Endothelial cell of umbilical vein (primary cell): ENCODE measurements at regions of chr11 and their contacts with region 1.

Region 1: GRCh38 chr11:82733444-82734119 is at the start of gene FAM181B:
- DNase-seq: peak; percentile 29
- H3K4me3 ChIP-seq: peak within 1 kb of the TSS; percentile 21 to 24 (median 22)
- H3K27ac ChIP-seq: no peak within 1 kb of the TSS
- H3K4me1 ChIP-seq: no peaks in the 10 kb centered on the region
- H3K27me3 ChIP-seq: peaks cover 47 to 79% of the 10 kb centered on the region in 2 experiments
- CTCF ChIP-seq: no peak
- POLR2A ChIP-seq: no peak
- total RNA-seq, gene FAM181B: not detected in 2 replicates

Region 2: GRCh38 chr11:82701847-82702520 is 31.6 kb before region 1 on chr11:
- CTCF ChIA-PET with region 1: no interaction called
- POLR2A ChIA-PET with region 1: no interaction called
- dilution Hi-C with region 1: no loop called
- intact Hi-C with region 1: loop called (anchors 1 kb)
- DNase-seq: peak; percentile 50
- H3K4me3 ChIP-seq: no peak overlapping the region
- H3K27ac ChIP-seq: no peak overlapping the region
- H3K4me1 ChIP-seq: no peaks in the 10 kb centered on the region
- H3K27me3 ChIP-seq: peaks cover 4 to 6% of the 10 kb centered on the region in 2 experiments
- CTCF ChIP-seq: peak; percentile 61 to 62
- POLR2A ChIP-seq: no peak